ENCODE measurements at regions of chr7 and their contacts with region 1.

Region 1: DNA sequence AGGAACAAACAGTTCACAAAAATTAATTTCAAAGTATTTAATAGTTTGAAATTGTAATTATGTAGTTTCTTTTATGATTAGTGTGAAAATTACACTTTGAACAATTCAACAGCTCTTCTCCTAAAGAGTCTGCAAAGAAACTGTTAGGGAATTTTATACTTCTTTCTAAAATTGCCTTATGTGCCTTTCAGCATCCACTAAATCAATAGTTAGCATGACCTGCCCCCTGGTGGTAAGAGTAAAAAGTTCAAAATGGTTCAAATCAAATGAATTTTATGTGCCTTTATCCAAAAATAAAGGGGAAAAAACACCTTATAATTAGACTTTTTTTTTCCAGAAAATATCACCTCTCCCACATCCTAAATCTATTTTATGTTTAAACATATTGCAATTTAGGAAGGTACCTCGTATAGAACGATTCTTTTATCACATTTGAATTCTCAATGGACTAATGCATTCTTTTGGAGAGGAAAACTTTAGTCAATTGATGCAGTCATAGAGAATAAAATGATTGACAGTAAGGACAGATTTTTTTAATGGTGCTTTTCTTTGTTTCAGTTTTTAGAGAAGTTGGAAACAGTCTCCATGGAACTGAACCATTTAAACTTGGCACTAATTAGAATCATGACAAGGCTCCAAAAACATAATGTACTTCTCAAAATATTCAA is 163.7 kb downstream of the SEMA3D start:
- DNase-seq: peak in 4 of 7 donors; percentile 16 to 50 (median 44)
- H3K4me3 ChIP-seq: no peak overlapping the region
- H3K27ac ChIP-seq: no peak overlapping the region
- H3K4me1 ChIP-seq: no peaks in the 10 kb centered on the region
- H3K27me3 ChIP-seq: no peaks in the 10 kb centered on the region
- CTCF ChIP-seq: peak; percentile 63 to 82 (median 72)
- POLR2A ChIP-seq: no peak

Region 2: GRCh38 chr7:83936056-83936708 is 1087.0 kb before region 1 on chr7:
- intact Hi-C with region 1: loop called in 1 of 2 experiments (anchors 10 kb)
- DNase-seq: peak; percentile 40 to 81 (median 63)
- H3K4me3 ChIP-seq: no peak overlapping the region
- H3K27ac ChIP-seq: no peak overlapping the region
- H3K4me1 ChIP-seq: no peaks in the 10 kb centered on the region
- H3K27me3 ChIP-seq: no peaks in the 10 kb centered on the region
- CTCF ChIP-seq: peak; percentile 60 to 86 (median 65)
- POLR2A ChIP-seq: no peak

Region 3: GRCh38 chr7:83976295-83976694 is 1046.9 kb before region 1 on chr7:
- intact Hi-C with region 1: loop called (anchors 5 to 10 kb)
- DNase-seq: no peak
- H3K4me3 ChIP-seq: no peak overlapping the region
- H3K27ac ChIP-seq: no peak overlapping the region
- H3K4me1 ChIP-seq: no peaks in the 10 kb centered on the region
- H3K27me3 ChIP-seq: no peaks in the 10 kb centered on the region
- CTCF ChIP-seq: peak; percentile 46 to 77 (median 62)
- POLR2A ChIP-seq: no peak

Region 4: GRCh38 chr7:84735011-84735410 is 288.2 kb before region 1 on chr7:
- intact Hi-C with region 1: no loop called
- DNase-seq: no peak
- H3K4me3 ChIP-seq: no peak overlapping the region
- H3K27ac ChIP-seq: no peak overlapping the region
- H3K4me1 ChIP-seq: no peaks in the 10 kb centered on the region
- H3K27me3 ChIP-seq: no peaks in the 10 kb centered on the region
- CTCF ChIP-seq: no peak
- POLR2A ChIP-seq: no peak